ENCODE measurements at regions of chr9 and their contacts with region 1.

Region 1: DNA sequence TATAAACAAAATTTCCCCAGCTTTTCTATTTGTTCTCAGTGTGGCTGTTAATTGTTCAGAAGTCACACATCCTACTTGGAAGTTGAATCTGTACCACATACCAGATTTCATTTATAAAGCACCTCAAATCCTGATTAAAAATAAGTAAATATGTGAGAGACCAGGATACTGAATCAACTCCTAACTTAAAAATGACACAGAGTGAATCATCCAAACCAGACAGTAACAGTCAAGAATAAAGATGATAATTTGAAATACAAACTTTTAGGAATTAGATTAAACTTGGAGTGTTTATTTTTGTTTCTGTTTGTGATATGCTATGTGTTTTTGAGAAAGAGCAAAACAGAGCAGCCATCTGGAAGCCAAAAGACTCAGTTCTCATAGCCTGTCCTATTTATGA is 633.2 kb upstream of the RORB start:
- DNase-seq: no peak
- H3K4me3 Mint-ChIP-seq: no peak overlapping the region
- H3K27ac Mint-ChIP-seq: no peak overlapping the region
- H3K4me1 Mint-ChIP-seq: no peaks in the 10 kb centered on the region
- H3K27me3 Mint-ChIP-seq: peaks cover 13% of the 10 kb centered on the region
- CTCF ChIP-seq: no peak

Region 2: GRCh38 chr9:73911804-73912203 is 47.9 kb after region 1 on chr9:
- CTCF ChIA-PET with region 1: no interaction called
- intact Hi-C with region 1: loop called (anchors 5 kb)
- DNase-seq: no peak
- H3K4me3 Mint-ChIP-seq: no peak overlapping the region
- H3K27ac Mint-ChIP-seq: no peak overlapping the region
- H3K4me1 Mint-ChIP-seq: no peaks in the 10 kb centered on the region
- H3K27me3 Mint-ChIP-seq: no peaks in the 10 kb centered on the region
- CTCF ChIP-seq: no peak